ENCODE measurements at regions of chr11 and their contacts with region 1.

Region 1: GRCh38 chr11:68447015-68447801 is 13.3 kb upstream of the PPP6R3 start:
- DNase-seq: peak; percentile 81
- H3K4me3 ChIP-seq: no peak overlapping the region
- H3K27ac ChIP-seq: no peak overlapping the region
- H3K4me1 ChIP-seq: no peaks in the 10 kb centered on the region
- H3K27me3 ChIP-seq: no peaks in the 10 kb centered on the region
- CTCF ChIP-seq: peak; percentile 94

Region 2: GRCh38 chr11:68297812-68298658 is 149.2 kb before region 1 on chr11:
- intact Hi-C with region 1: loop called (anchors 10 kb)
- DNase-seq: peak; percentile 95
- H3K4me3 ChIP-seq: no peak overlapping the region
- H3K27ac ChIP-seq: peak overlapping the region; percentile 90
- H3K4me1 ChIP-seq: peaks cover 15% of the 10 kb centered on the region
- H3K27me3 ChIP-seq: no peaks in the 10 kb centered on the region
- CTCF ChIP-seq: peak; percentile 98

Region 3: GRCh38 chr11:68328374-68329091 is 118.7 kb before region 1 on chr11:
- intact Hi-C with region 1: no loop called
- DNase-seq: peak; percentile 72
- H3K4me3 ChIP-seq: no peak overlapping the region
- H3K27ac ChIP-seq: peak overlapping the region; percentile 24
- H3K4me1 ChIP-seq: peaks cover 34% of the 10 kb centered on the region
- H3K27me3 ChIP-seq: no peaks in the 10 kb centered on the region
- CTCF ChIP-seq: no peak

Region 4: GRCh38 chr11:68402355-68403031 is 44.7 kb before region 1 on chr11:
- intact Hi-C with region 1: loop called (anchors 5 kb)
- DNase-seq: no peak
- H3K4me3 ChIP-seq: no peak overlapping the region
- H3K27ac ChIP-seq: no peak overlapping the region
- H3K4me1 ChIP-seq: peaks cover 14% of the 10 kb centered on the region
- H3K27me3 ChIP-seq: no peaks in the 10 kb centered on the region
- CTCF ChIP-seq: no peak

Measured in colonic mucosa (tissue), 4 donors.